ENCODE measurements at regions of chr13 and their contacts with region 1.

Region 1: DNA sequence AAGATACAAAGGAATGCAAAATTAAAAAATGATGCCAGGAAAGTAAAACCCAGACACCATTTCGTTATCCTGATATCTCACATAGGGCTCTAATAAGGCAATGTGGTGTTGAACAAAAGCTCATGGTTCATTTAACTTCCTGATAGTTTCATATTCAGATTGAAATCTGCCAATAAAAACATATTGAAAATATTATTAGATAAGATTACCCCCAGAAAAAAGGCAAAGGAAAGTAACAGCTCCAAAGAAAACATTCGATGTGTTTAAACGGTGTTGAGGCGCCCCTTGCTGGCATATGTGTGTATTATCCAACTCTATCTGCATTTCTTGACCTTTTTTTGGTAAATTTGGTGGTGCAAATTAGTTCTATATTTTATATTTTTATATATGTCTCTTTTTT is 75.9 kb downstream of the ESD start:
- DNase-seq: peak in 3 of 5 donors; percentile 47 to 78 (median 57)
- H3K4me3 ChIP-seq: no peak overlapping the region
- H3K27ac ChIP-seq: no peak overlapping the region
- H3K4me1 ChIP-seq: no peaks in the 10 kb centered on the region
- H3K27me3 ChIP-seq: no peaks in the 10 kb centered on the region
- CTCF ChIP-seq: peak; percentile 64

Region 2: DNA sequence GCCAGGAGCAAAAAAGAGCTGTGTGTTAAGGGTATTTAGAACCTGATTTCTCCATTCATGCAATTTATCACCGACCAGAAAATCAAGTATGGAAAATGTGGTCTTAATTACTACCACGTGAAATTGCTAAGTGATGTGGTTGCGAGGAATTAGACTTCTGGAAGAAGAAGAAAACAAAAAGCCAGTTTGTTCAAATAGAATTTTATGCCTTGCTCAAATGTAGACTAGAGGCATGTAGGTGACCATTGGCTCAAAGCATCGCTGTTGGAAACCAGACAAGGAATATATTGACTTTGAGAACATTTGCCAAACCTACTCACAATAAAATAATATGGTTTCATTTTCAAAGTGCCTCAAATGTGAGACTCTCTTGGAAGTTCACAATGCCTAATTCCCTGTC is 225.4 kb before region 1 on chr13:
- intact Hi-C with region 1: loop called (anchors 5 kb)
- DNase-seq: no peak
- H3K4me3 ChIP-seq: no peak overlapping the region
- H3K27ac ChIP-seq: no peak overlapping the region
- H3K4me1 ChIP-seq: no peaks in the 10 kb centered on the region
- H3K27me3 ChIP-seq: no peaks in the 10 kb centered on the region
- CTCF ChIP-seq: no peak

Measured in kidney (tissue), 22 donors.